OCI-LY7 (cell line): ENCODE measurements at regions of chr5 and their contacts with region 1.

Region 1: DNA sequence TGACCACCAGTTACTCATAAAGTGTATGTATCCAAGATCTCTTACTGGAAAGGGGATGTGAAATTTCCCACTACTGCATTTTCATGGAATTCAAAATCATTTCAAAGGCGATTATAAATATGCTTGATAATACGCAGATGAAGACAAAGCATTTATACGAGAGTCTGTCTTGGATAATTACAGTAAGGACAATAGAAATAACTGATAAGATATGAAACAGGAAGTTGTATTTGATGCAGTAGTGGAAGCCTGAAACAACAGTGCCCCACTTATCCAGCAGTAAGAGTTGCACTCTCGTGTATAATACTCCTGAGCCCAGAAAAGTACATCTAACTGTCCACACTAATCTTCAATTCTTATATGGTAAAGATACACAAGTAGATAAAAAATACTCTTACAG is 188.7 kb upstream of the POU5F2 start:
- DNase-seq: no peak
- H3K4me3 ChIP-seq: no peak overlapping the region
- H3K27ac ChIP-seq: no peak overlapping the region
- H3K4me1 ChIP-seq: no peaks in the 10 kb centered on the region
- CTCF ChIP-seq: no peak

Region 2: GRCh38 chr5:94316916-94317838 is 387.1 kb after region 1 on chr5:
- CTCF ChIA-PET with region 1: no interaction called
- POLR2A ChIA-PET with region 1: no interaction called
- intact Hi-C with region 1: no loop called
- DNase-seq: no peak
- H3K4me3 ChIP-seq: no peak overlapping the region
- H3K27ac ChIP-seq: no peak overlapping the region
- H3K4me1 ChIP-seq: no peaks in the 10 kb centered on the region
- CTCF ChIP-seq: no peak

Region 3: GRCh38 chr5:94928891-94929290 is 998.8 kb after region 1 on chr5:
- CTCF ChIA-PET with region 1: interaction called, 13 read pairs
- POLR2A ChIA-PET with region 1: no interaction called
- intact Hi-C with region 1: no loop called
- DNase-seq: no peak
- H3K4me3 ChIP-seq: no peak overlapping the region
- H3K27ac ChIP-seq: no peak overlapping the region
- H3K4me1 ChIP-seq: no peaks in the 10 kb centered on the region
- CTCF ChIP-seq: no peak